Activated CD8-positive, alpha-beta T cell treated with anti-CD3 and anti-CD28 coated beads for 36 hours (primary cell): ENCODE measurements at regions of chr19 and their contacts with region 1.

Region 1: GRCh38 chr19:34041925-34042521 is 130.3 kb upstream of the LSM14A start:
- DNase-seq: peak; percentile 88
- ATAC-seq: peak; percentile 74
- H3K4me3 Mint-ChIP-seq: no peak overlapping the region
- H3K27ac Mint-ChIP-seq: no peak overlapping the region
- H3K4me1 Mint-ChIP-seq: no peaks in the 10 kb centered on the region
- H3K27me3 Mint-ChIP-seq: peaks cover 19% of the 10 kb centered on the region
- CTCF ChIP-seq: peak; percentile 97

Region 2: GRCh38 chr19:33928458-33928950 is 113.5 kb before region 1 on chr19:
- CTCF ChIA-PET with region 1: no interaction called
- POLR2A ChIA-PET with region 1: no interaction called
- intact Hi-C with region 1: no loop called
- DNase-seq: no peak
- ATAC-seq: no peak
- H3K4me3 Mint-ChIP-seq: no peak overlapping the region
- H3K27ac Mint-ChIP-seq: no peak overlapping the region
- H3K4me1 Mint-ChIP-seq: no peaks in the 10 kb centered on the region
- H3K27me3 Mint-ChIP-seq: peaks cover 12% of the 10 kb centered on the region
- CTCF ChIP-seq: no peak

Region 3: DNA sequence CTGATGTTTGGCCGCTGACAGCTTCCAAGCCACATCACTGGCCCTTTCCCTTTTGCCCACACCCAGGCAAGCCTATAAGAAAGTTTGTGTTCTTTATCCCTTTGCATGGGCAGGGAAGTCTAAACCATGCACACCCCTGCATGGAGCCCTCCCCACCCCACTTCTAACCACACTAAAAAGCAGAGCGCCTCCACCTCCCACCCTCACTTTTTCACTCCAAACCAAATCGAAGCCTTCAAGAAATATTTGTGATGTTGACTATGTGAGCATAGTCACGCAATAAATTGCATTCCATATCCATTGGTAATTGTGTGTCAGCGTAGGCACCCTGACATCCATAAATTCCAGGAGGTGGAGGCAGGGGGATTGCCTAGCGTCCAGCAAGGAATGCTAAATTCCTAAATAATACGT is 25.8 kb after region 1 on chr19:
- CTCF ChIA-PET with region 1: interaction called, 11 read pairs
- POLR2A ChIA-PET with region 1: no interaction called
- intact Hi-C with region 1: no loop called
- DNase-seq: no peak
- ATAC-seq: no peak
- H3K4me3 Mint-ChIP-seq: no peak overlapping the region
- H3K27ac Mint-ChIP-seq: no peak overlapping the region
- H3K4me1 Mint-ChIP-seq: no peaks in the 10 kb centered on the region
- H3K27me3 Mint-ChIP-seq: peaks cover 14% of the 10 kb centered on the region
- CTCF ChIP-seq: no peak

Region 4: DNA sequence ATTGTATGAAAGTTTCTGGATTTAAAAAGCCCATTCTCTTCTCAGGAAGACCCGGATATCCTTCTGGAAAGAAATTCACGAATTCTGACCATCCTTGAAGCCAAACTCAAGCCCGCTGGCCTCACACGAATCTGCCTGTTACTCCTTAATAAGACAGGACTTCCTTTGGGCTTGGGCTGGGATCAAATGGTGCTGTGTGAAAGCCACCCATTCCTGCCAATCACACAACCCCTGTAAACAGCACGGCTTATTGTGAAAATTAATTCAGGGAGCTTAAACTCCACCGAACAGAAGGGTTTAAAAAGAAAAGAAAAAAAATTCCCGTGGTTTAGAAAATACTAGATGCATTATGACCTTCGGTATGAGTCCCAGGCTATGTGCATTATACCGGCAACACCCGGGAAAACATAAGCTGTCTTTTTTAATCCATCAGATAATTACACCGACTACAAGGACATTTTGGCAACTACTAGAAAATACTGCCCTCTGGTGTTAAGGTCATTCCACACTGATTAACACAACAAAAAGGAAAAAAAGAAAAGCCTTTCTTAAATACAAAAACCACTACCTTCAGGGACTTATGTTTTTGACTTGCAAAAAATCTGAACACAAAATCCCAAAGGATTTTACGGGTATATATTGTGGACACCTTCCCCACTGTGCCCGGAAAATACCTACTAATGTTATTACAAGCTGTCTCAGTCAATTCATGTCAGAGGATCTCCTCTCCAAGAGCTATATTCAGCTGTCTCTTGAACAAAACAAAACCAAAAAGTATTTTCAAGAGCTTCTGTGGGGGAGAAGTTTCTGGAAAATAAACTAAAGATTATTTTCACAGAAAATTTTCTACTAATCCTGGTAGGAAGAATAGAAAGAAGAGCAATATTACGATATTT is 54.2 kb after region 1 on chr19:
- CTCF ChIA-PET with region 1: interaction called, 43 read pairs
- POLR2A ChIA-PET with region 1: no interaction called
- intact Hi-C with region 1: no loop called
- DNase-seq: no peak
- ATAC-seq: no peak
- H3K4me3 Mint-ChIP-seq: no peak overlapping the region
- H3K27ac Mint-ChIP-seq: no peak overlapping the region
- H3K4me1 Mint-ChIP-seq: no peaks in the 10 kb centered on the region
- H3K27me3 Mint-ChIP-seq: peaks cover 11% of the 10 kb centered on the region
- CTCF ChIP-seq: peak; percentile 57

Region 5: DNA sequence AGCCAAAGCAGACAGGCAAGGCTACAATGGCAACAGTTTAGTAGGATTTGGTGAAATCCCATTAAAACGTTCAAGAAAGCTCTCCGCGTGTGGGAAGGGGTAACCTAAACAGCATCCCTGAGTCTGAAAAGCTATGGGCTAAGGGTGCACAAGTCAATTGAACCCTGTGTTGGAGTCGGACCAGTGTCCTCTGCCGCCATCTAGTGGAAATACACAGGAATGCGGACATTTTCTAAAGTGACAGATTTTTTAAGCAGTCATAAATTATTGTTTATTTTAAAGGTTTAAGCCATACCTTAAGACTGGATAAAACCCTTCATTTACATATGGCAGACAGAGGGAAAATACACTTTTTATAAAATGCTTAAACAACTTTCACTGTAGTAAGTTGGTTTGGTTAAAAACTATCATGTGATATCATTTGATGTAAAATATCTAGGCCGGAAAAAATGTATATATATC is 103.7 kb after region 1 on chr19:
- CTCF ChIA-PET with region 1: interaction called, 42 read pairs
- POLR2A ChIA-PET with region 1: no interaction called
- intact Hi-C with region 1: loop called (anchors 2 kb)
- DNase-seq: peak; percentile 72
- ATAC-seq: peak; percentile 74
- H3K4me3 Mint-ChIP-seq: no peak overlapping the region
- H3K27ac Mint-ChIP-seq: no peak overlapping the region
- H3K4me1 Mint-ChIP-seq: no peaks in the 10 kb centered on the region
- H3K27me3 Mint-ChIP-seq: no peaks in the 10 kb centered on the region
- CTCF ChIP-seq: peak; percentile 80